Right cardiac atrium (tissue), 5 donors: ENCODE measurements at regions of chr6 and their contacts with region 1.

Region 1: GRCh38 chr6:97053643-97054411 is 129.3 kb downstream of the KLHL32 start:
- DNase-seq: no peak
- ATAC-seq: no peak
- H3K4me3 ChIP-seq: no peak overlapping the region
- H3K27ac ChIP-seq: no peak overlapping the region
- H3K4me1 ChIP-seq: no peaks in the 10 kb centered on the region
- H3K27me3 ChIP-seq: no peaks in the 10 kb centered on the region

Region 2: GRCh38 chr6:96897383-96898240 is 156.2 kb before region 1 on chr6 and contains the start of gene NDUFAF4:
- intact Hi-C with region 1: loop called (anchors 2 to 5 kb)
- DNase-seq: peak; percentile 97 to 98 (median 98)
- ATAC-seq: peak; percentile 99
- H3K4me3 ChIP-seq: peak within 1 kb of the TSS; percentile 78
- H3K27ac ChIP-seq: peak within 1 kb of the TSS; percentile 92
- H3K4me1 ChIP-seq: no peaks in the 10 kb centered on the region
- H3K27me3 ChIP-seq: no peaks in the 10 kb centered on the region
- total RNA-seq, gene NDUFAF4: 73.8 to 104 (median 91.4) TPM

Region 3: GRCh38 chr6:96923871-96924493 is 129.8 kb before region 1 on chr6:
- intact Hi-C with region 1: loop called in 1 of 4 experiments (anchors 10 kb)
- DNase-seq: no peak
- ATAC-seq: peak; percentile 63 to 86
- H3K4me3 ChIP-seq: peak overlapping the region; percentile 68
- H3K27ac ChIP-seq: peak overlapping the region; percentile 40
- H3K4me1 ChIP-seq: no peaks in the 10 kb centered on the region
- H3K27me3 ChIP-seq: no peaks in the 10 kb centered on the region

Region 4: DNA sequence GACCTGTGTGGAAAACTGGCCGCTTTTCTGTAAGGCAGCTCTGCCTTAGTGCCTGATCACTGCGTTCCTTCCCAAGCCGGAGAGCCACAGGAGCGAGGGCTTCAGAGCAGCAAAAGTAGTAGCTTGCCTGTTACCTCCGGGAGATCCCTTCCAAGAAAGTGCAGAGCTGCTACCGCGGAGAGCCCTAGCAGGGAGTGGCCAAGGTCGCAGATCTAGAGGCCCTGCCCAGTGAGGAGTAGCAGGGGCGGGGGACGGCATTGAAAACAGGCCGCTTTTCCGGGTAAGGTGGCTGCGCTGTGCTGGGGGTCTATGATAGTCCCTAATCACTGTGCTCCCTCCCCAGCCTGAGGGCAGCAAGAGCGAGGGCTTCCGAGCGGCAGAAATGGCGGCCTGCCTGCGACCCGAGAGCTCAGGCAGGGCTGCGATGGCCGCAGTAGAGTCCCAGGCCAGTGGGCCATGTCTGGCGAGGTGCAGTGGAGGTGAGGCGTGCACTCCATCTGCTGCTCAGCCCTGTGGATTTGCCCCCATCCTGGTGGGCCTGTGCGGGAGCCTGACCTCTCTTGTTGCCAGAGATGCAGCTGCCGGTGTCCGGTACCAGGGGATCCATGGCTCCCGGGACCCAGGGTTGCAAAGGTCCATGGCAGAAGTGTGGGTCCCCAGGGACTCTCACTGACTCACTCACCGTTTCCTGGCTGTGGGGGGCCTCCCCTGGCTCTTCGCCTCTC is 62.0 kb before region 1 on chr6:
- intact Hi-C with region 1: no loop called
- DNase-seq: no peak
- ATAC-seq: no peak
- H3K4me3 ChIP-seq: no peak overlapping the region
- H3K27ac ChIP-seq: no peak overlapping the region
- H3K4me1 ChIP-seq: no peaks in the 10 kb centered on the region
- H3K27me3 ChIP-seq: no peaks in the 10 kb centered on the region